HepG2 (cell line): ENCODE measurements at regions of chr17 and their contacts with region 1.

Region 1: DNA sequence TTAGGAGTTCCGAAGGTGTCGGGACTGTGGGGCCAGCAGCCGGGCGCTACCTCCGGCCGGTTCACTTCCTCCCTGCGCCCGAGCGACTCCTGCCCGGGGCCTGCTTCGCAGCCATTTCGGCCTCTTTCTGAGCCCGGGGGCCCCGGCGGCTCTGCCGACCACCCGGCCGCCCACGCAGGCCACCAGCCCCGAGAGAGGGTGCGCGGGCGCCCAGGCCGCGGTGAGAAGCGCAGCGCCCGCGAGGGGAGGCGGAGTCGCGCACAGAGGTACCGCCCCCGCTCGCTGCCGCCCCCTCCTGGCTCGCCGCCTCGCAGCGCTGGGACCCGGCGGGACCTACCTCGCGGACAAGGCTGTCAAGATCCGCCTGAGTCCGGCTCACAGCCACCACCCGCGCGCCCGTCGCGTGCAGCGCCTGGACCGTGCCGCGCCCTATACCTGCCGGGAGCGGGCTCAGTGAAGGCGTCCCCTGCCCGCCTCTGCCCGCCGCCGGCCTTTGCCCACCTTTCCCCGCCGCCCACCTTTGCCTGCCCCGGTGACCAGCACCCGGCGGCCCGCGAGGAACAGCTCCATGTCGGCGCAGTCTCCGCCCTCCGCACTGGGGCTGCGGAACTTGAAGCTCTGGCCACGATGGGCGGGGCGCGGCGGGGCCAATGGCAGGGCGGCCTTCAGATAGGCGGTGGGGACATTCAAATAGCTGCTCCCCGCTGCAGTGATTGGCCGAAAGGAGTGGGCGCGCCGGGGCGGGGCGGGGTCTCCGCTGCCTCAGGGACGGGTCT is at the start of gene DCXR:
- DNase-seq: peak; percentile 97
- ATAC-seq: peak; percentile 89
- H3K4me3 ChIP-seq: peak within 1 kb of the TSS; percentile 87 to 98 (median 93)
- H3K27ac ChIP-seq: peak within 1 kb of the TSS; percentile 91
- H3K4me1 ChIP-seq: peaks cover 57% of the 10 kb centered on the region
- H3K27me3 ChIP-seq: no peaks in the 10 kb centered on the region
- CTCF ChIP-seq: peak; percentile 92
- EP300 ChIP-seq: peak in 1 of 2 experiments; percentile 56; a peak in 1 of 4 replicates
- POLR2A ChIP-seq: peak; percentile 84 to 99
- RAD21 ChIP-seq: peak; percentile 92
- total RNA-seq, gene DCXR: 286 and 311 TPM in 2 replicates

Region 2: DNA sequence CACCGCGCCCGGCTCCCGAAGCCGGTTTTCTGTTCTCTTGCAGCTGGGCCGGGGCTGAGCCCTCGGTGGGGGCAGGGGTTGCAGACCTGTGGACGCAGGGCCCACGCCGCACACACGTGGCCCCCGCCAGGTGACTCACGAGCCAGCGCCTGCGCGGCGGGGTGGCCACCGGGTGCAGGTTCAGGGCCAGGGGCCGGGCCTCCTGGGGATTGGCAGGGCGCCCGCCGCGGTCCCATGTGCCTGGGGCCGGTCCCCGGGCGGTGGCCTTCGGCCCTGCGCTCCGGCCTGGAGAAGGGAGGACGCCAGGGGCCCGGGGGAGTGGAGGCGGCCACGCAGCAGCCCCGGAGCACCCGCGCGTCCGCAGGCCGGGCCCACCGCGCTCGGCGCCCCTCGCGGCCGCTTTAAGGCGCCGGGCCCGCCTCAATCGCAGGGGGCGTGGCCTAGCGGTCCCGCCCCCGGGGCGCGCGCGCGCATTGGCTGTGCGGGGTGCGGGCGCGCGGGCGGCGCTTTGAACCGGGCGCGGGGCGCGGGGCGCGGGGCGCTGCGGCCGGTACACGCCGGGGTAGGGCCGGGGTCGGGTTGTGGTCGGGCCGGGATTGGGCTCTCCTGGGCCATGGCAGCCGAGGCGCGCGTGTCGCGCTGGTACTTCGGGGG is 325.4 kb before region 1 on chr17 and contains the start of gene SLC25A10:
- CTCF ChIA-PET with region 1: no interaction called
- POLR2A ChIA-PET with region 1: interaction called, 10 read pairs
- in situ Hi-C with region 1: no loop called
- intact Hi-C with region 1: no loop called
- DNase-seq: peak; percentile 89
- ATAC-seq: peak; percentile 56
- H3K4me3 ChIP-seq: peak within 1 kb of the TSS; percentile 87 to 95 (median 92)
- H3K27ac ChIP-seq: peak within 1 kb of the TSS; percentile 93
- H3K4me1 ChIP-seq: peaks cover 32% of the 10 kb centered on the region
- H3K27me3 ChIP-seq: no peaks in the 10 kb centered on the region; a peak in 1 of 5 replicates
- CTCF ChIP-seq: no peak; the same call in 1 of the 2 replicates
- EP300 ChIP-seq: peak; percentile 41 to 88; a peak in 2 of 4 replicates
- POLR2A ChIP-seq: peak in 1 of 2 experiments; percentile 45; a peak in 1 of 4 replicates
- RAD21 ChIP-seq: peak; percentile 79
- total RNA-seq, gene SLC25A10: 111 and 140 TPM in 2 replicates

Region 3: GRCh38 chr17:81959362-81960129 is 77.8 kb before region 1 on chr17:
- CTCF ChIA-PET with region 1: interaction called, 7 read pairs
- POLR2A ChIA-PET with region 1: interaction called, 20 read pairs
- in situ Hi-C with region 1: no loop called
- intact Hi-C with region 1: no loop called
- DNase-seq: peak; percentile 40
- ATAC-seq: peak; percentile 49
- H3K4me3 ChIP-seq: peak overlapping the region; percentile 95 to 97 (median 96)
- H3K27ac ChIP-seq: peak overlapping the region; percentile 86
- H3K4me1 ChIP-seq: peaks cover 70% of the 10 kb centered on the region
- H3K27me3 ChIP-seq: no peaks in the 10 kb centered on the region; a peak in 1 of 5 replicates
- CTCF ChIP-seq: peak; percentile 80
- EP300 ChIP-seq: peak in 1 of 2 experiments; percentile 5; a peak in 1 of 4 replicates
- POLR2A ChIP-seq: no peak
- RAD21 ChIP-seq: peak; percentile 100

Region 4: DNA sequence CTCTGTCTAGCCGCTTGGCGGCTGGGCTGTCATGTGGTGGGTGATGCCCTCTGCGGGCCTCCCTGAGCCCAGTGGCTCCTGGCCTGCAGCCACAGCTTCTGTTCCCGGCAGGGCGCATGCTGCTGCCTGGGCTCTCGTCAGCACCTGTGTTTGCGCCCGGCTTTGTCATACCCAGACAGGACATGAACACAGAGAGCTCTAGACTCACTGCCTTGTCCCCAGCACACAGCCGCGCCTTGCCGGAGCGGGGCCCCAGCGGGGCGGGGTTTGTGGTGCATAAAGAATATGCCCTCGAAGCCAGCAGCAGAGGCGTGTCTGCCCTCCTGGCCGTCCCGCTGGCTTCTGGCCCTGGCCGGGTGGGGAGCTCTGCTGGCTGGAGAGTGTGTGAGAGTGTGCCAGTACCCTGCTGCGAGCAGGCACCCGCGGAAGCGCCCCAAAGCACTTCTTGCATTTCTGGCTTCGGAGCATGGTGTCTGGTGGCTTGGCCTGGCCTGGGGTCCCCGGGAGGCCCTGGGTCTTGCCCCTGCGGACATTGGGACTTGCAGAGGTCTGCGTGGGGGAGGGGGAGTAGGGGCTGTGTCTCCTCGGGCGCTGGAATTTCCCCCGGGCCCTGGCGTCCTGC is 45.5 kb before region 1 on chr17:
- CTCF ChIA-PET with region 1: no interaction called
- POLR2A ChIA-PET with region 1: interaction called, 19 read pairs
- in situ Hi-C with region 1: no loop called
- intact Hi-C with region 1: loop called (anchors 1 kb)
- DNase-seq: peak; percentile 98
- ATAC-seq: peak; percentile 66
- H3K4me3 ChIP-seq: peak overlapping the region; percentile 29 to 69 (median 44)
- H3K27ac ChIP-seq: peak overlapping the region; percentile 97
- H3K4me1 ChIP-seq: peaks cover 70% of the 10 kb centered on the region
- H3K27me3 ChIP-seq: no peaks in the 10 kb centered on the region
- CTCF ChIP-seq: peak; percentile 77
- EP300 ChIP-seq: peak; percentile 3 to 66; a peak in 3 of 4 replicates
- POLR2A ChIP-seq: peak in 1 of 2 experiments; percentile 92; a peak in 2 of 4 replicates
- RAD21 ChIP-seq: peak; percentile 88

Region 5: DNA sequence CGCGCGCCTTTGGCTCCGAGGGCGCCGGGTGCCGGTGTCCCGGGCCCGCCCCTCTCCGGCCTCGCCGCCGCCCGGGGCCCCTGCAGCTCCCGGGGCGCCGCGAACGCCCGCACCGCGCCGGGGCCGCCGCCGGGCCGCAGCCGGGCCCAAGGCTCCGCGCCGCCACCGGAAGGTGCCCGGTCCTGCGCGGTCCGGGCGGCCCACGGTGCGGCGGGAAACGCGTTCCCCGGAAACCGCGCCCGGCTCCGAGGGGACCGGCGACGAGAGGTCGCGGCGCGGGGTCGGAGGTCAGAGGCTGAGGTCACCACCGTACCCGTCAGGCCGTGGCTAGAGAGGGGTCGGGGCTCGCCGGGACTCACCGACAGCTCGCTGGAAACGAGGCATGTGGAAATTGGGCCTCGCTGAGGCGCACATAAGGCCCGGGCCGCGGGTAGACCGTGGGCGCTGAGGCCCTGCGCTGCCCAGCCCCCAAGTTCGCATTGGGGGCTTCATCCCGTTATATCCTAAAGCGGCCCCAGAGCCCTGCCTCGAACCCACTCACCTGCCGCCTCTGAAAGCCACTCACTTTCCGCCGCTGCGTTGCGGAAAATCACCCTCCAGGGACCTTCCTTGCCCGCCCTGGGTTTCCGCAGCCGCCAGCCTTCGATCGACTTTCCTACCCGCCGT is 28.5 kb after region 1 on chr17 and contains the start of gene DUS1L:
- CTCF ChIA-PET with region 1: no interaction called
- POLR2A ChIA-PET with region 1: interaction called, 11 read pairs
- in situ Hi-C with region 1: no loop called
- intact Hi-C with region 1: no loop called
- DNase-seq: no peak
- ATAC-seq: peak; percentile 27
- H3K4me3 ChIP-seq: peak within 1 kb of the TSS; percentile 69 to 99 (median 92)
- H3K27ac ChIP-seq: peak within 1 kb of the TSS; percentile 64
- H3K4me1 ChIP-seq: peaks cover 28% of the 10 kb centered on the region
- H3K27me3 ChIP-seq: no peaks in the 10 kb centered on the region
- CTCF ChIP-seq: peak; percentile 42
- EP300 ChIP-seq: peak; percentile 46 to 48; a peak in 1 of 4 replicates
- POLR2A ChIP-seq: 0 out of 4 replicates have a peak, but pooled peaks of 1 of the 2 experiments have one; percentile 38
- RAD21 ChIP-seq: peak; percentile 51; the same call in 1 of the 2 replicates
- total RNA-seq, gene DUS1L: 67.9 and 109 TPM in 2 replicates

Region 6: DNA sequence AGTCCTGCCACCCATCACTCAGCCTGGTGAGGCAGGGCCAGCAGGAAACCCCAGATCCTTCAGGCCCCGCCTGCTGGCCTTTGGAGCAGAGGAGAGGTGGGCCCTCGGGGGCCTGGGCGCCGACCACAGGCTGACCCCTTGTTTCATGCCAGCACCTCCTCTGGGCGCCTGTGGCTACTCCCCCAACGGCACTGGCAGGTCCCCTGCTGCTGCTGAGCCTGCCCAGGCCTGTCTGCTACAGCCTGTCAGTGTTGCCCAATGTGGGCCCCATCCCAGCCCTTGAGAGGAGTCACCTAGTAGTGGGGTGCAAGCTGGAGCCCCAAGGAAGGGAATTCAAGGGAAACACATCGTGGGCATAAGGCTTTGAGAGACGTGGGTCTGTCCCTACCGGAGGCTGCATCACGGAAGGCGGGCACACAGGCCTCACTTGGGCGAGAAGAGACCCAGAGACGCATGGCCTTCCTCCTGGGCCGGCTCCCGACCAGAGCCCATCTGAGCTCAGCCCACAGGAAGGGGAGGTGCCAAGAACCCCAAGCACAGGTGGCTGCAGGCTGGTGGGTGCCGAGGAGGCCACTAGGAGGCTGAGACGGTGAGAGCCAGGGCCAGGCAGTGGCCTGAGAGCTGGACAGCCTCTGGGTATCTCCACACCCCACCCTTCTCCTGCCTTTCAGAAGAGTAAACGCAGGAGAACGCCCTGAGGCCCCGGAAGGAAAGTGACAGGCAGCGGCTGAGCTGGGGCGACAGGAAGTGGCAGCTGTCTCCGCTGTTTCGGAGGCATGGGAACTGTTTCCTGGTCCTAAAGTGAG is 68.8 kb after region 1 on chr17:
- CTCF ChIA-PET with region 1: no interaction called
- POLR2A ChIA-PET with region 1: interaction called, 37 read pairs
- in situ Hi-C with region 1: no loop called
- intact Hi-C with region 1: loop called (anchors 2 kb)
- DNase-seq: peak; percentile 94
- ATAC-seq: peak; percentile 80
- H3K4me3 ChIP-seq: peak overlapping the region; percentile 56 to 82 (median 57)
- H3K27ac ChIP-seq: peak overlapping the region; percentile 72
- H3K4me1 ChIP-seq: peaks cover 79% of the 10 kb centered on the region
- H3K27me3 ChIP-seq: no peaks in the 10 kb centered on the region
- CTCF ChIP-seq: peak; percentile 92
- EP300 ChIP-seq: peak in 1 of 2 experiments; percentile 50; a peak in 1 of 4 replicates
- POLR2A ChIP-seq: peak in 1 of 2 experiments; percentile 94; a peak in 2 of 4 replicates
- RAD21 ChIP-seq: peak; percentile 80

Region 7: GRCh38 chr17:82164853-82165252 is 127.6 kb after region 1 on chr17:
- CTCF ChIA-PET with region 1: no interaction called
- POLR2A ChIA-PET with region 1: no interaction called
- in situ Hi-C with region 1: no loop called
- intact Hi-C with region 1: no loop called
- DNase-seq: no peak
- ATAC-seq: no peak
- H3K4me3 ChIP-seq: no peak overlapping the region
- H3K27ac ChIP-seq: no peak overlapping the region
- H3K4me1 ChIP-seq: no peaks in the 10 kb centered on the region
- H3K27me3 ChIP-seq: no peaks in the 10 kb centered on the region
- CTCF ChIP-seq: no peak
- EP300 ChIP-seq: no peak
- POLR2A ChIP-seq: no peak
- RAD21 ChIP-seq: no peak

Region 8: DNA sequence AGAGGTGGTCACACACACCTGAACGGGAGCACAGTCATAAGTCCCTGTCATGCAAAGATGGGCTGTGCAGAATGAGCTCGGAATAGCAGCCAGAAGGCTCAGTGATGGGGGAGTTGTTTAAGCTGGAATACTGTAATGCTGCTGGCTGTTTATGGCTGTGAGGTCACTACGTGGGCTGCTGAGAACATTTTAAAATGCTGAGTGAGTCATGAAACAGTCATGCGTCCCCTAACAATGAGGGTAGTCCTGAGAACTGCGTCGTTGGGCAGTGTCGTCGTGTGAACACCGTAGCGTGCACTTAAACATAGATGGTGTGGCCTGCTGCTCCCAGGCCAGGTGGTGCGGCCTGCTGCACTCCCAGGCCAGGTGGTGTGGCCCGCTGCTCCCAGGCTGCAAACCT is 754.2 kb after region 1 on chr17:
- CTCF ChIA-PET with region 1: no interaction called
- POLR2A ChIA-PET with region 1: no interaction called
- in situ Hi-C with region 1: no loop called
- intact Hi-C with region 1: no loop called
- DNase-seq: no peak
- ATAC-seq: no peak
- H3K4me3 ChIP-seq: no peak overlapping the region
- H3K27ac ChIP-seq: no peak overlapping the region
- H3K4me1 ChIP-seq: no peaks in the 10 kb centered on the region
- H3K27me3 ChIP-seq: no peaks in the 10 kb centered on the region
- CTCF ChIP-seq: no peak
- EP300 ChIP-seq: no peak
- POLR2A ChIP-seq: no peak
- RAD21 ChIP-seq: no peak